ENCODE measurements at regions of chr10 and their contacts with region 1.

Region 1: DNA sequence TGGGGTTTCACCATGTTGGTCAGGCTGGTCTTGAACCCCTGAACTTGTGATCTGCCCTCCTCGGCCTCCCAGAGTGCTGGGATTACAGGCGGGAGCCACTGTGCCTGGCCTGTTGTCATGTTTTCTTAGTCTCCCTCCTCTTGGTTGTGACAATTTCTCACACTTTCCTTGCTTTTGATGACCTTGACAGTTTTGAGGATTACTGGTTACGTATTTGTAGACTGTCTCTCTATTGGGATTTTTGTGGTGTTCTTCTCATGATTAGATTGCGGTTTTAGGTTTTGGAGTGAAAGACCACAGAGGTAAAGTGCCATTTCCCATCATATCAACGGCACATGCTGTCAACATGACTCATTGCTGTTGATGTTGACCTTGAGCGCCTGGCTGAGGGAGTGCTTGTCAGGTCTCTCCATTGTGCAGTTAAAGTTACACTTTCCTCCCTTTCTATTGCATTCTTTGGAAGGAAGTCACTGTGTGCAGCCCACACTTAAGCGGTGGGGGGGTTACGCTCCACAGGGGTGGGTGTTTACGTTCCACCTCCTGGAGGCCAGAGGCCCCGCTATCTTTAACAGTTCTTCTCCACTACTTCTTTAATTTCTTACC is 10.8 kb downstream of the NEURL1 start:
- DNase-seq: peak; percentile 52 to 76 (median 62)
- ATAC-seq: peak; percentile 91
- H3K4me3 ChIP-seq: no peak overlapping the region
- H3K27ac ChIP-seq: peak overlapping the region; percentile 54; the same call in 1 of the 3 replicates
- H3K4me1 ChIP-seq: peaks cover 0 to 10% of the 10 kb centered on the region in 2 experiments; a peak in 4 of 5 replicates
- H3K27me3 ChIP-seq: peaks cover 8 to 47% of the 10 kb centered on the region in 2 experiments; a peak in 3 of 5 replicates
- CTCF ChIP-seq: no peak
- EP300 ChIP-seq: peak; percentile 59
- POLR2A ChIP-seq: no peak
- RAD21 ChIP-seq: no peak

Region 2: DNA sequence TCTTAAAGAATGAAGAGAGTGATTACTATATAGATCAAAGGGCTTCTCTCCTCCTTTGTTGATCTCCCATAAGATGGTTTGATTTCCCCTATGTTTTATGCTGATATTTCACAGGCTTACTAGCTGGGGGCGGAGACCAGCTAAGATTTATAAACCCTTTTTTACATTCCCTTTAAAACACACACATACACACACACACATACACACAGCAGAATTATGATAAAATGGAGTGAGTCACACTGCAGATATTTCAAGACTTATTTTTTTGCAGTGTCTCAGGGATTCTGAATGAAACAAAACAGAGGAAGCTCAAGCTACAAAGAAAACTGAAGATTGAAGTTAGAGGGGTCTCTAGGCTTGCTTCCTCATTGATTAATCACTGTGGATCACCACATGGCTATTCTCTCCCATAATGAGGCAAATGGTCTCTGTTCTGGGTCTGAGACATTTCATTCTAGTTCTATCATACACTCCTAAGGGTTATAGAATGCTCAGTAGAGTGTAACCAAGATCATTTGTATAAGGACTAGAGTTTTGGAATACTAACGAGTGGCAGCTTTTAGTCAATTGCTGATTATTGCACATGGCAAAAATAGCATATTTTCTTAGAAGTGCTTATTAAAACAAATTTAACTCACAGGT is 208.8 kb before region 1 on chr10:
- CTCF ChIA-PET with region 1: no interaction called
- POLR2A ChIA-PET with region 1: no interaction called
- in situ Hi-C with region 1: no loop called
- intact Hi-C with region 1: no loop called
- DNase-seq: no peak
- ATAC-seq: no peak
- H3K4me3 ChIP-seq: no peak overlapping the region
- H3K27ac ChIP-seq: no peak overlapping the region
- H3K4me1 ChIP-seq: no peaks in the 10 kb centered on the region; a peak in 1 of 5 replicates
- H3K27me3 ChIP-seq: peaks cover 5% of the 10 kb centered on the region in 2 experiments; a peak in 2 of 5 replicates
- CTCF ChIP-seq: no peak
- EP300 ChIP-seq: no peak
- POLR2A ChIP-seq: no peak
- RAD21 ChIP-seq: no peak

Region 3: DNA sequence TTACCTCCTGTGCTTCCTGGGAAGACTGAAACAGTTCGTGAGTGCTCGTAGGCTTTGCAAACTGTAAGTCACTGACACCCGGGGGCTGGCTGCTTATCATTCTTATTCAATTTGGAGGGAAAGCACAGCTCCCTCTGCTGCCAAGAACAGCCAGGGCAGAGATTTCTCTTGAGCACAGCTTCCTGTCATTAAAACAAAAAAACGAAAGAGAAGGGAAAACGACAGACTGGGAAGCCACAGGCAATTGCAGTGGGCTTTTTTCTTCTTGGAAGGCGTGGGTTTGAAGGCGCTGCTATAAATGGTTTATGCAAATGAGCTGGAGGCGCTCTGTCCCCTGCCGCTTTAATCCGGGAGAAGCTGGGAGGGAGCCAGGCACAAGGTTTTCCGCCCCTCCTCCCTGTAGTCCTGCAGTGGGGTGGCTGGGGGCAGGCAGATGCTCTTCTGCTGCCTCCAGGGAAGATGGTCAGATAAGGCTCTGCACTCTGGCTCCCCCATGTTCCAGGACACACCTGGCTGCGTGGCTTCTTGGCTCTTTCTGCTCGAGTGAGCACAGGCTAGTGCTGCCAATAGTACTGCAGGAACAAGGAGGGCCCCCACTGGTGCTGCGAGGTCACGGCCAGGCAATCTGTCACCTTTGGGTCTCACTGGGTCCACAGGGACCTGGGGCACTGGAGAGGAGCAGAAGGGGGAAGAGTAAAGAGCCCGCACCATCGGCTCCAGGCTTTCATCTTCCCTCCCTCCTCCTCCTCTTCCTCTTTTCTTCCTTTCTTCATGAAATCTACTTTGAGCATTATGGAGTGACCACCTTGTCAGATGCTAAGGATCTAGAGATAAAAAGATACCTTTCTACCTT is 38.7 kb after region 1 on chr10:
- CTCF ChIA-PET with region 1: no interaction called
- POLR2A ChIA-PET with region 1: interaction called, 3 read pairs
- in situ Hi-C with region 1: no loop called
- intact Hi-C with region 1: loop called (anchors 5 kb)
- DNase-seq: peak in 3 of 4 experiments; percentile 29 to 41 (median 32)
- ATAC-seq: peak; percentile 77
- H3K4me3 ChIP-seq: no peak overlapping the region
- H3K27ac ChIP-seq: no peak overlapping the region
- H3K4me1 ChIP-seq: peaks cover 0 to 5% of the 10 kb centered on the region in 2 experiments; a peak in 2 of 5 replicates
- H3K27me3 ChIP-seq: peaks cover 0 to 34% of the 10 kb centered on the region in 2 experiments; a peak in 2 of 5 replicates
- CTCF ChIP-seq: peak; percentile 38 to 51 (median 43); a peak in 5 of 6 replicates
- EP300 ChIP-seq: no peak
- POLR2A ChIP-seq: no peak
- RAD21 ChIP-seq: peak in 1 of 2 experiments; percentile 18; a peak in 1 of 4 replicates

Region 4: DNA sequence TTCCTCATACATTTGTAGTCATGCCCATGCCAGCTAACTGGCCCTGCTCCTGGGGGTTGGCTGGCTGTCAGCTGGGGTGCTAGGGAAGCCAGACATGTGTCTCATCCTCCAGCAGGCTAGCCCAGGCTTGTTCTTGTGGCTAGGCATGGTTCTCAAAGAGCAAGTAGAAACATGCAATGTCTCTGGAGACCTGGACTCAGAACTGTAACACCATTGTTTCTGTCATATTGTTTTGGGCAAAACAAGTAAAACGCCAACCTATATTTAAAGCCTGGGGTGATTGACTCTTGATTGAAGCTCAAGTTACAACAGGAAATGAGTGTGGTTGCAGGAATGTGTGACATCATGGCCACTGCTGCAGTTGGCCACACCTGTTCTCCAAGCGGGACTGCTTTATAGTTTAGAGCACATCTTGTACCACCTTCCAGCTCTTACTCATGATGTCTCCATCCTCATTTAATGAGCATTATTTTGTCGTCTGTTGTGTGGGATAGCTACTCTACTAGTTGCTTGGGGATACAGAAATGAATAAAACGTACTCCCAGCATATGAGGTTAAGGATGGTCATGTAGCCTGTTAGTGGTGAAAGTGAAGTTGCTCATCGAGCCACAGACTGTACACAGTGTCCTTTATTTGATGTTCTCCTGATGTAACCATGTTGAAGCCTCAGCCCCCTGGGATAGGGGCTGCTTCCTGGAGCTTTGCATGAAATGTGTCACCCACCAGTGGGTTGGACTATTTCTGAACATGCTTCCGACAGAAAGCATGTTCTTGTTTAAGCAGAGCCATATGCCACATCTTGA is 1305.2 kb after region 1 on chr10:
- CTCF ChIA-PET with region 1: no interaction called
- POLR2A ChIA-PET with region 1: no interaction called
- in situ Hi-C with region 1: no loop called
- intact Hi-C with region 1: no loop called
- DNase-seq: no peak
- ATAC-seq: no peak
- H3K4me3 ChIP-seq: no peak overlapping the region
- H3K27ac ChIP-seq: no peak overlapping the region
- H3K4me1 ChIP-seq: no peaks in the 10 kb centered on the region
- H3K27me3 ChIP-seq: no peaks in the 10 kb centered on the region
- CTCF ChIP-seq: no peak
- EP300 ChIP-seq: no peak
- POLR2A ChIP-seq: no peak
- RAD21 ChIP-seq: no peak